ENCODE measurements at regions of chr1 and their contacts with region 1.

Region 1: DNA sequence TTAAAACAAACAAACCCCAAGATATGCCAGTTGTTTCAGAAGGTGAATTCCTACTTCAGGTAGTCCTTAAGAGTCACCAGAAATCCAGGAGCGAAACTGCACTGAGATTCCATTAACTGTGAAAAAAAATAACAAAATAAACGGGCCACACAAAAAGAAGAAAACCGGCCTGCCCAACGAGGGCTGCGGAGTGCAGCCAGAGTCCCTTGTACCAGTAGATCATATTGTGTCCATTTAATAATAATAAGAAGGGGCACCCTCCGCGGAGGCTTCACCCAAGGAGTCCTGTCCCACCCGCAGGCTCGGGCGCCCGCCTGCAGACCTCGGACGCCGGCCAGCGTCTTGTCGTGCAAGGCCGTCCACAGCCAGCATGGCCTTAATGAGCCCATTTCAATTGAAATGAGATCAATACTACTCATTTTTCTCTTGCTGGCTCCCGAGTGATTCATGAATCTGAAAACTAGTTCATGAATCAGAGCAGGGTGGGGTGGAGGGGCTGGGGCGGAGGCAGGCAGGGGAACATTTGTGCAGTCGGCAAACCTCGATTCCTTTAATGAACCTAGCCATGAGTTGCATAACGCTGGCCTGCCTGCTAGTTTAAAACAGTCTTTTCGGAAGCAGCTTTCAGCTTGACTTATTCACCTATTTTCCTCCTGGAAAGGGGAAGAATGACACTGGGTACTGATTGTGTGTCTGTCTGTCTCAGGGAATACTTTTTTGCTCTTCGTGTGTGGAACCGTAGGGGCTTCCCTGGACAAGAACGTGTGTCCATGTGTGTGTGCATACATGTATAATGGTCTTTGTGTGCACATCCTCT is 113.1 kb upstream of the IRF2BP2 start:
- DNase-seq: peak; percentile 63 to 93
- H3K4me3 ChIP-seq: peak overlapping the region; percentile 26 to 46
- H3K27ac ChIP-seq: peak overlapping the region; percentile 95 to 97
- H3K4me1 ChIP-seq: peaks cover 36 to 79% of the 10 kb centered on the region in 2 donors
- H3K27me3 ChIP-seq: no peaks in the 10 kb centered on the region
- CTCF ChIP-seq: no peak

Region 2: DNA sequence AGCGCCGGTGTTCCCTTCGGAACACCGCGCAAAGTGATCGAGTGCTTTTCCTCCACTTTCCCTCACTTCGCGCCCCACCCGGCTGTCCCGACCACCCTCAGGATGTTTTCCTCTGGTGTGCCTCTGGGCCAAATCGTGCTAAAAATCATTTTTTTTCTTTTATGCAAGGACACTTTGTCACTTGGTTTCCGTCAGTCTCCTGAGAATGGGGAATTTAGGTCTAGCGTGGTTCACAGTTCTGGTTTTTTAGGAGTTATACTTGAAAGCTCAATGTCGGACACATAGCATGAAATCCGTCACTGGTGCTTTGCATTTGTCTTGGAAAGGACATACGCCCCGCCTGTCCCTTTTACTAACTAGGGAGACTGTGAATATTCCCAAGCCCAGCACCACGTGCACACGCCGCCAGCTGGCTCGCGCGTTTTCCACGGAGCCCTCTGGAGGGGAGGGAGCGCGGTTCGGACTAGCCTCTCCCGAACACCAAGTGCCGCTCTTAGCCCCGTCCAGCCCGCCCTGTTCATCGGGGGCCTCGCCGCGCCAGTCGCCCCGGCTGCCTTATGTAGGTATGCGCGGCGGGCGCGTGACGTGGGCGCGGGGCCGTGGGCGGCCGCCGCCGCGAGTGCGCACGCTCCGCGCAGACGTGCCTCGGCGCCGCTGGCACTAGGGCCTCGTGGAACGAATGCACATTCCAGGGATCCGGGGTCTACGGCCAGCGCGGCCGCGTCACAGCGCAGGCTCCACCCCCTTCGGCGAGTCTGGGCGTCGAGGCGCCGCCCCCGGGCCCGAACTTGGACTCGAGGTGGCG is 112.6 kb before region 1 on chr1:
- intact Hi-C with region 1: loop called (anchors 1 kb)
- DNase-seq: peak; percentile 90 to 98
- H3K4me3 ChIP-seq: peak overlapping the region; percentile 66 to 74
- H3K27ac ChIP-seq: peak overlapping the region; percentile 94 to 99
- H3K4me1 ChIP-seq: peaks cover 15 to 31% of the 10 kb centered on the region in 2 donors
- H3K27me3 ChIP-seq: no peaks in the 10 kb centered on the region
- CTCF ChIP-seq: no peak

Region 3: DNA sequence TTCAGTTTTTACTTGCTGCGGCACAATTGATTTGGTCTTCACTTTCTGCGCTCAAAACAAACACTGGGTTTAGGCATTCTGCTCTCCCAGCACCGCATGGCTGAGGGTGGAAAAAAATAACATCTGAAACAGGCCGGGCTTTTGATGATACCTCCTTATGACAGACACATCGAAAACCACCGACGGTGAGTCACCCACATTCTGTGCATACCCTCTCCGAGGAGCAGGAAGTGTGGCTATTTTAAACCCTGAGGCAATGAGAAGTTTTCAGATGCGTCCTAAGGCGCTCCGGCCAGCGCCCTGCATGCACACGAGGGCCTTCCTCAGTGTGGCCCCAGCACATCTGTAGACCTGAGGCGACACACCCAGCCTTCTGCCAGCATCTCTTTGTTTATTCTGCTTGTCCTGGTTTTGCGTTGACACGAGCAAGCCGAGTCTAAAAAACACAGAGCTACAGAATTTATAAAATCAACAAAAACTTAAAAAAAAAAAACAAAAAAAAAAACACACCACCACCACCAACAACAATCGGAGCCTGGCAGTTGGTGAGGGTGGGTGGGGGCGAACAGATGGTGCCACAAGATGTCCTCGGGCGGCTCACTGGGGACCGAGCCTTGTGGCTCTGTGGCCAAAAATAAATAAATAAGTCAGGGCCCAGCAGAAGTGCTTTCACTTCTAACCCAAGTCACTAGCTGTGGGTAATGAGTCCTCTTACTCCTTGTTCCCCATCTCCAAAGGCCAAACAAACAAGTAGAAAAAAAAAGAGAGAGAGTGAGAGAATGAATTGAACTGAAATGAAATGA is 49.4 kb after region 1 on chr1:
- intact Hi-C with region 1: loop called (anchors 2 kb)
- DNase-seq: peak; percentile 83 to 94
- H3K4me3 ChIP-seq: peak overlapping the region in 1 of 2 donors; percentile 32
- H3K27ac ChIP-seq: peak overlapping the region; percentile 46 to 54
- H3K4me1 ChIP-seq: peaks cover 0 to 12% of the 10 kb centered on the region in 2 donors
- H3K27me3 ChIP-seq: no peaks in the 10 kb centered on the region
- CTCF ChIP-seq: no peak

Region 4: DNA sequence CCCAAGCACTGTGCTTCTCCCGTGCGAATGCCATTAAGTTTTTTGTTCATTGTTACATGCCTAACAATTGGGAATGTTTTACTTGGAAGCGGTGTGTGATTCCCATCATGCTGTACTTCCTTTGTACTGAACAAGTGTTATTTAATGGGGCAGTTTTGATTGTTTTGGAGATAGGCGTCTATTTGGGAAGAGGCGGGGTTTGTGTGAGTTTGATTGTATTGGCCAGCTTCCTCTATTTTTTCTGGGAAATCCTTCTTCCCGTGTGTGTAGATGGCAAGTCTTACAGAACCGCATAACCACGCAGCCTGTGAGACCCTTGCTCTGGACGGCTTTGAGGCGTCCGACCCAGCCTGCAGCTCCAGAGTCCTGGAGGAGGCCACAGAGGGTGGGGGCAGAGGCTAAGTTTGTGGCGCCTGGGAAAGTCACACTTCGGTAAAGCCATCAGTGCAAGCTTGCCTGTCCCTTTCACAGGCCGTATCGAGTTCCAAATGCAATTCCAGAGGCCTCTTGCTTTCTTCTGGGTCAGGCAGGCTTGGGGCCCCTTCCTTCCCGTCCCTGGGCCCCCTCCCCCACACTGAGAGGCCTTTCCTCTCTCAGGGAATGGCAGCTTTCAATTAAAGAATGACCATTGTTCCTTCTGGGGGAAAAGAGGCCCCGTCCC is 195.2 kb after region 1 on chr1:
- intact Hi-C with region 1: loop called (anchors 2 kb)
- DNase-seq: peak in 1 of 2 donors; percentile 75
- H3K4me3 ChIP-seq: no peak overlapping the region
- H3K27ac ChIP-seq: peak overlapping the region; percentile 86 to 94
- H3K4me1 ChIP-seq: peaks cover 28 to 77% of the 10 kb centered on the region in 2 donors
- H3K27me3 ChIP-seq: no peaks in the 10 kb centered on the region
- CTCF ChIP-seq: no peak

Region 5: GRCh38 chr1:235075188-235075926 is 352.2 kb after region 1 on chr1:
- intact Hi-C with region 1: loop called (anchors 2 kb)
- DNase-seq: peak; percentile 82 to 96
- H3K4me3 ChIP-seq: peak overlapping the region; percentile 32 to 49
- H3K27ac ChIP-seq: peak overlapping the region; percentile 94 to 98
- H3K4me1 ChIP-seq: peaks cover 19 to 71% of the 10 kb centered on the region in 2 donors
- H3K27me3 ChIP-seq: no peaks in the 10 kb centered on the region
- CTCF ChIP-seq: no peak

Region 6: GRCh38 chr1:235225299-235225698 is 502.2 kb after region 1 on chr1:
- intact Hi-C with region 1: no loop called
- DNase-seq: no peak
- H3K4me3 ChIP-seq: no peak overlapping the region
- H3K27ac ChIP-seq: no peak overlapping the region
- H3K4me1 ChIP-seq: no peaks in the 10 kb centered on the region
- H3K27me3 ChIP-seq: no peaks in the 10 kb centered on the region
- CTCF ChIP-seq: no peak